Naive thymus-derived CD4-positive, alpha-beta T cell (primary cell): ENCODE measurements at regions of chr1 and their contacts with region 1.

Region 1: GRCh38 chr1:25608488-25609178 is 8.0 kb upstream of the MAN1C1 start:
- DNase-seq: peak; percentile 69 to 87 (median 85)
- ATAC-seq: peak; percentile 100
- H3K4me3 ChIP-seq: no peak overlapping the region
- H3K4me3 Mint-ChIP-seq: peak overlapping the region; percentile 1 to 78 (median 47)
- H3K27ac ChIP-seq: peak overlapping the region; percentile 9
- H3K27ac Mint-ChIP-seq: peak overlapping the region in 6 of 9 donors; percentile 15 to 71 (median 52)
- H3K4me1 ChIP-seq: peaks cover 0 to 4% of the 10 kb centered on the region in 2 donors
- H3K4me1 Mint-ChIP-seq: peaks cover 7 to 28% (median 21%) of the 10 kb centered on the region in 7 donors
- H3K27me3 ChIP-seq: peaks cover 0 to 6% of the 10 kb centered on the region in 2 donors
- H3K27me3 Mint-ChIP-seq: peaks cover 0 to 79% (median 0%) of the 10 kb centered on the region in 5 donors

Region 2: GRCh38 chr1:25355841-25356395 is 252.7 kb before region 1 on chr1:
- CTCF ChIA-PET with region 1: no interaction called
- POLR2A ChIA-PET with region 1: no interaction called
- intact Hi-C with region 1: no loop called
- DNase-seq: no peak
- ATAC-seq: no peak
- H3K4me3 ChIP-seq: no peak overlapping the region
- H3K4me3 Mint-ChIP-seq: peak overlapping the region in 5 of 10 donors; percentile 16 to 72 (median 36)
- H3K27ac ChIP-seq: peak overlapping the region; percentile 41
- H3K27ac Mint-ChIP-seq: peak overlapping the region; percentile 1 to 93 (median 79)
- H3K4me1 ChIP-seq: peaks cover 6 to 13% of the 10 kb centered on the region in 2 donors
- H3K4me1 Mint-ChIP-seq: peaks cover 17 to 45% (median 23%) of the 10 kb centered on the region in 7 donors
- H3K27me3 ChIP-seq: no peaks in the 10 kb centered on the region
- H3K27me3 Mint-ChIP-seq: no peaks in the 10 kb centered on the region

Region 3: DNA sequence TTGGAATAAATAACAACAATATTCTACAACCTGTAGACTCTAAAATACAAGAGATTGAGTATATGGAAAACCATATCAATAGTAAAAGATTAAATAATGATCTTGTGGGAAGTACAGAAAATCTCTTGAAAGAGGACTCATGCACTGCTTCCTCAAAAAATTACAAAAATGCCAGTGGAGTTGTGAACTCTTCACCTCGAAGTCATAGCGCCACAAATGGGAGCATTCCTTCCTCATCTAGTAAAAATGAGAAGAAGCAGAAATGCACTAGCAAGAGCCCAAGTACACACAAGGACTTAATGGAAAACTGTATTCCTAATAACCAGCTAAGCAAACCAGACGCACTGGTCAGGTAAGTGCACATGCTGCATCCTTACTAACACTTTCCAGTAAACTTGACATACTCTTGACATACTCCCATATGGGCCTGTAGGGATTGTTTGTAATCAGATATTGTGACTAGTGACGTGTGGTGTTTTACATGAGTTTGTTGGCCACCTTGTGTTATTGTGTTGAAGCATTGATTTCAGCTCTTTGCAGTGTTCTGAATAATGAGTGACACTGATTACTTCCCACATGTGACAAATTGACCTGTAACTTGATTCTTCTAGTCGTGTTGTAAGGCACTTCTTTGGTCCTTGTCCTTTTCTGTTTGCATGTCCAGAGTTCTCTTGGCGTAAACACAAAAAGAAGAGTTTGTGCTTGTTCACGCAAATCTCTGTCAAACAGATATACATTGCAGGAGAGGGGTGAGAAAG is 149.9 kb before region 1 on chr1:
- CTCF ChIA-PET with region 1: no interaction called
- POLR2A ChIA-PET with region 1: no interaction called
- intact Hi-C with region 1: no loop called
- DNase-seq: no peak
- ATAC-seq: no peak
- H3K4me3 ChIP-seq: no peak overlapping the region
- H3K4me3 Mint-ChIP-seq: no peak overlapping the region
- H3K27ac ChIP-seq: no peak overlapping the region
- H3K27ac Mint-ChIP-seq: peak overlapping the region in 2 of 9 donors; percentile 32 to 72
- H3K4me1 ChIP-seq: no peaks in the 10 kb centered on the region
- H3K4me1 Mint-ChIP-seq: peaks cover 0 to 22% (median 13%) of the 10 kb centered on the region in 7 donors
- H3K27me3 ChIP-seq: no peaks in the 10 kb centered on the region
- H3K27me3 Mint-ChIP-seq: no peaks in the 10 kb centered on the region

Region 4: DNA sequence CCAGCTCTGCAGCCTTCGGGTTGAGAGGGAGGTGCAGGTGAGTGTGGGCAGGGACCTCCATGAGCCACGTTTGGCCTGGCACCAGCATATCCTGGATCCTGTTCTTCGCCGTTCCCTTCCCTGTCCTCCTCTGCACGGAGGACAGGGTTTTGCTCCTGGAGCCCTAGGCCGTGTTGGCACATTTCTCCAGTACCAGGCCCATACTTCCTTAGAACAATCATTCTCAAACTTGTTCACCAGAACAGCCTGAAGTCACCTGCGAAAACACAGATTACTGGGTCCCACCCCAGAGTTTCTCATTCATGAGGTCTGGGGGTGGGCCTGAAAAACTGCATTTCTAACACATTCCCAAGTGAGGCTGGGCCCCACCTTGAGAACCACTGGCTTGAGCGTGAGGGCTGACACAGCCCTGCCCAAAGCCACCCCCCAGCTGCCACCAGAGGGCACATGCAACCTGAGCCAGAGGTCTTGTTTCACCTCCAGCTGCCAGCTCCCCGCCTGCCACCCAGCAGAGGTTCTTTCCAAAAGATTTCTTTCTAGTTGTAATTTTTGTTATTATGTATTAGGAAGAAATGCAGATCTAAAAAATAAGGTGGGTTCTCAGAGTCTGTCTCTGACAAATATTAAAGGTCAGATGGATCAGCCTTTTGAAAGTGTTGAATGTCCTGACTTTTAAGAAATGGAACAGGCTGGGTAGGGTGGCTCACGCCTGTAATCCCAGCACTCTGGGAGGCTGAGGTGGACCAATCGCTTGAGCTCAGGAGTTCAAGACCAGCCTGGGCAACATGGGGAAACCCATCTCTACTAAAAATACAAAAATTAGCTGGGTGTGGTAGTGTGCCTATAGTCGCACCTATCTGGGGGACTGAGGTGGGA is 104.8 kb before region 1 on chr1:
- CTCF ChIA-PET with region 1: interaction called, 3 read pairs
- POLR2A ChIA-PET with region 1: no interaction called
- intact Hi-C with region 1: loop called in 1 of 2 experiments (anchors 5 kb)
- DNase-seq: peak; percentile 47 to 82 (median 75)
- ATAC-seq: peak; percentile 95
- H3K4me3 ChIP-seq: no peak overlapping the region
- H3K4me3 Mint-ChIP-seq: peak overlapping the region in 1 of 10 donors; percentile 2
- H3K27ac ChIP-seq: peak overlapping the region; percentile 6
- H3K27ac Mint-ChIP-seq: peak overlapping the region in 8 of 9 donors; percentile 68 to 92 (median 76)
- H3K4me1 ChIP-seq: peaks cover 0 to 20% of the 10 kb centered on the region in 2 donors
- H3K4me1 Mint-ChIP-seq: peaks cover 12 to 39% (median 31%) of the 10 kb centered on the region in 7 donors
- H3K27me3 ChIP-seq: no peaks in the 10 kb centered on the region
- H3K27me3 Mint-ChIP-seq: peaks cover 0 to 6% (median 0%) of the 10 kb centered on the region in 5 donors

Region 5: GRCh38 chr1:25543425-25544242 is 65.0 kb before region 1 on chr1 and contains the start of gene LDLRAP1:
- CTCF ChIA-PET with region 1: interaction called, 3 read pairs
- POLR2A ChIA-PET with region 1: interaction called, 4 read pairs
- intact Hi-C with region 1: loop called in 1 of 2 experiments (anchors 5 kb)
- DNase-seq: peak in 8 of 9 donors; percentile 28 to 81 (median 52)
- ATAC-seq: peak; percentile 97
- H3K4me3 ChIP-seq: peak within 1 kb of the TSS; percentile 60
- H3K4me3 Mint-ChIP-seq: peak within 1 kb of the TSS; percentile 82 to 98 (median 95)
- H3K27ac ChIP-seq: peak within 1 kb of the TSS; percentile 87
- H3K27ac Mint-ChIP-seq: peak within 1 kb of the TSS; percentile 34 to 97 (median 91)
- H3K4me1 ChIP-seq: peaks cover 35 to 38% of the 10 kb centered on the region in 2 donors
- H3K4me1 Mint-ChIP-seq: peaks cover 26 to 48% (median 39%) of the 10 kb centered on the region in 7 donors
- H3K27me3 ChIP-seq: no peaks in the 10 kb centered on the region
- H3K27me3 Mint-ChIP-seq: peaks cover 0 to 15% (median 0%) of the 10 kb centered on the region in 5 donors
- total RNA-seq, gene LDLRAP1: 28.1 to 364 (median 159) TPM

Region 6: GRCh38 chr1:25796811-25797458 is 188.3 kb after region 1 on chr1:
- CTCF ChIA-PET with region 1: interaction called, 32 read pairs
- POLR2A ChIA-PET with region 1: interaction called, 13 read pairs
- intact Hi-C with region 1: loop called (anchors 1 to 2 kb)
- DNase-seq: peak; percentile 71 to 89 (median 86)
- ATAC-seq: peak; percentile 76
- H3K4me3 ChIP-seq: peak overlapping the region; percentile 15
- H3K4me3 Mint-ChIP-seq: peak overlapping the region; percentile 58 to 94 (median 81)
- H3K27ac ChIP-seq: peak overlapping the region; percentile 37
- H3K27ac Mint-ChIP-seq: peak overlapping the region; percentile 51 to 98 (median 93)
- H3K4me1 ChIP-seq: peaks cover 32 to 67% of the 10 kb centered on the region in 2 donors
- H3K4me1 Mint-ChIP-seq: peaks cover 30 to 88% (median 74%) of the 10 kb centered on the region in 7 donors
- H3K27me3 ChIP-seq: no peaks in the 10 kb centered on the region
- H3K27me3 Mint-ChIP-seq: peaks cover 0 to 29% (median 0%) of the 10 kb centered on the region in 5 donors

Region 7: DNA sequence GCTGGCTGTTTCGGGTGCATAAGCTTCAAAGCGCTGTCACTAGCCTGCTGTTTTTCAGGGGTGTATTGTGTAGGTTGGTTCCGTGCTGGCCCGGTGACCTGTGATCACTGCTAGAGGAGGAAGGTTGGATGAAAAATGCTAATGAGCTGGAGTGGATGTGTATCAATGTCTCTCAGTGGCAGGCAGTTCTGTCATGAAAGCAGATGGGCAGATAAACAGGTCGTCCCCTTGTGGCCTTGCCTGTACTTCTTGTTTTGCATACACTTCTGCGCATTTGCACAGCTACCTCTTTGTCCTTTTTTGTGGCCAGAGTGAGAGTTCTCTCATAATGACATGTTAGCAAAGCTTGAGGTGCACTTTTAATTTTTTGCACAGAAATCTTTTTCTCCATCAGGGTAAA is 194.3 kb after region 1 on chr1:
- CTCF ChIA-PET with region 1: interaction called, 106 read pairs
- POLR2A ChIA-PET with region 1: interaction called, 13 read pairs
- intact Hi-C with region 1: no loop called
- DNase-seq: peak in 1 of 9 donors; percentile 39
- ATAC-seq: peak; percentile 30
- H3K4me3 ChIP-seq: no peak overlapping the region
- H3K4me3 Mint-ChIP-seq: peak overlapping the region; percentile 19 to 90 (median 63)
- H3K27ac ChIP-seq: no peak overlapping the region
- H3K27ac Mint-ChIP-seq: peak overlapping the region in 6 of 9 donors; percentile 2 to 61 (median 42)
- H3K4me1 ChIP-seq: peaks cover 12 to 40% of the 10 kb centered on the region in 2 donors
- H3K4me1 Mint-ChIP-seq: peaks cover 26 to 72% (median 63%) of the 10 kb centered on the region in 7 donors
- H3K27me3 ChIP-seq: no peaks in the 10 kb centered on the region
- H3K27me3 Mint-ChIP-seq: peaks cover 0 to 26% (median 0%) of the 10 kb centered on the region in 5 donors

Region 8: GRCh38 chr1:25810341-25811299 is 202.0 kb after region 1 on chr1:
- CTCF ChIA-PET with region 1: interaction called, 106 read pairs
- POLR2A ChIA-PET with region 1: interaction called, 5 read pairs
- intact Hi-C with region 1: loop called in 1 of 2 experiments (anchors 1 kb)
- DNase-seq: peak; percentile 63 to 88 (median 74)
- ATAC-seq: peak; percentile 92
- H3K4me3 ChIP-seq: no peak overlapping the region
- H3K4me3 Mint-ChIP-seq: no peak overlapping the region
- H3K27ac ChIP-seq: no peak overlapping the region
- H3K27ac Mint-ChIP-seq: peak overlapping the region in 5 of 9 donors; percentile 36 to 60 (median 59)
- H3K4me1 ChIP-seq: peaks cover 0 to 7% of the 10 kb centered on the region in 2 donors
- H3K4me1 Mint-ChIP-seq: peaks cover 3 to 17% (median 6%) of the 10 kb centered on the region in 7 donors
- H3K27me3 ChIP-seq: no peaks in the 10 kb centered on the region
- H3K27me3 Mint-ChIP-seq: no peaks in the 10 kb centered on the region